Mammary epithelial cell (primary cell): ENCODE measurements at regions of chr11 and their contacts with region 1.

Region 1: GRCh38 chr11:43419460-43419859 is 60.7 kb downstream of the TTC17 start:
- DNase-seq: peak; percentile 14
- H3K4me3 ChIP-seq: no peak overlapping the region
- H3K27ac ChIP-seq: no peak overlapping the region
- H3K4me1 ChIP-seq: no peaks in the 10 kb centered on the region
- H3K27me3 ChIP-seq: no peaks in the 10 kb centered on the region
- CTCF ChIP-seq: peak; percentile 62 to 75

Region 2: GRCh38 chr11:43311791-43312607 is 107.5 kb before region 1 on chr11 and contains the start of gene API5:
- CTCF ChIA-PET with region 1: interaction called, 10 read pairs
- dilution Hi-C with region 1: no loop called
- in situ Hi-C with region 1: no loop called
- intact Hi-C with region 1: loop called (anchors 1 kb)
- DNase-seq: peak; percentile 92
- H3K4me3 ChIP-seq: peak within 1 kb of the TSS; percentile 75 to 95 (median 88)
- H3K27ac ChIP-seq: peak within 1 kb of the TSS; percentile 86
- H3K4me1 ChIP-seq: peaks cover 21% of the 10 kb centered on the region
- H3K27me3 ChIP-seq: no peaks in the 10 kb centered on the region
- CTCF ChIP-seq: peak; percentile 71 to 86
- total RNA-seq, gene API5: 85.5 to 119 TPM

Region 3: DNA sequence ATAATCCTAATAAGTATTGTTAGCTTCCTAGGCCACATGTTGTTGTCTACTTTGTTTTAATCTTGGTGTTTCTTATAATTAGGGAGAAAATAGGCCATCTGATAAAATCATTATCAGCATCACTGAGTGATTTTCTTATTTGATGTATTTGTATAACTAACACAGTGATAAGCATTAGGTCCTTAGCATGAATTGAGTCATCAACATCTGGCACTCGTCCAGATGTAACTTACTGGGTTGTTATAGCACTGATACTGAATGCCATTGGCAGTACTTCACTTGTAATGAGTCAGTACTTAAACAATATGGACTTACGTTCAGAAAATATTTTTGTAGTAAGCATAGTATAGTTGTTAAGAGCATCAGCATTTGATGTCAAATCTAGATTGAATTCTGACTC is 91.5 kb before region 1 on chr11:
- CTCF ChIA-PET with region 1: no interaction called
- dilution Hi-C with region 1: no loop called
- in situ Hi-C with region 1: no loop called
- intact Hi-C with region 1: loop called (anchors 5 kb)
- DNase-seq: peak; percentile 79
- H3K4me3 ChIP-seq: no peak overlapping the region
- H3K27ac ChIP-seq: no peak overlapping the region
- H3K4me1 ChIP-seq: peaks cover 4% of the 10 kb centered on the region
- H3K27me3 ChIP-seq: no peaks in the 10 kb centered on the region
- CTCF ChIP-seq: no peak